ENCODE measurements at regions of chr4 and their contacts with region 1.

Region 1: DNA sequence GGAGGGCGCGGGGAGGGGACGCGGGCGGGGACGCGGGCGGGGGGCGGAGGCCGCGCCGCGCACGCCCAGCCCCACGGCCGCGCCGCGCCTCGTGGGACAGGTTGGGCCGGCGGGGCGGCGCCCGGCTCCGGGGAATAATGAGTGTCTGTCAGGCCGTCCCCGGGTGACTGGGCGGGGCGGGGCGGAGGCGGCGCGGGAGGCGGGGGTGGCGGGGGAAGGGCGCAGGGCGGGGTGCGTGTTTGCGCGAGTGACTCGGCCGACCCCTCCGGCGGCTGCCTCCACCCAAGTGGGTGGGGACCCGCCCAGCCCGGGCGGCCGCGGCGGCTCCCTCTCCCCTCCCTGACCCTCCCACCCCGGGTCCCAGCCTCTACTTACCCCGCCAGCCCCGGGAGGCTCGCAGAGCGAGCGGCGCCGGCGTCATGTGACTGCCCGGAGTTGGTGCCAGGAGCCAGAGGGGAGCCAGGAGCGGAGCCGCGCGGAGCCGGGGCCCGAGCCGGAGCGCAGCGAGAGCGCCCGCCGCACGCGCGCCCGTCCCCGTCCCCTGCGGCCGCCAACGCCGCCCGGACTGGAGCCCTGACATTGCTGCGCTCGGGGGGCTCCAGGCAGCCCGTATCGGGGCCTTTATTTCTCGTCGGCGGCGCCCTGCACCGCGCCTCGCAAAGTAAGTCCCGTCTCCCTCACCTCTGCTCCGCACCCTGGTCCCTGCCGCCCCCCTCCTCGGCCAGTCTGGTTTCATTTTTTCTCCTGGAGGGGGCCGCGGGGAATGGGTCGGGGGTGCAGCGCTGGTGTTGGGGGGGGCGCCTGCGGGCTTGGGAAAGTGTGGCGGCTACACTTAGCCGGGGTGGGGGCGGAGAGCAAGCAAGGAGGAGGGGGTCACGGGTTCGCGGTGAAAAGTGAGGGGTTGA is at the start of gene KLF3:
- DNase-seq: peak; percentile 79 to 98 (median 86)

Region 2: GRCh38 chr4:37686373-37687193 is 977.5 kb before region 1 on chr4 and contains the start of gene RELL1:
- intact Hi-C with region 1: loop called (anchors 5 kb)
- DNase-seq: peak; percentile 99 to 100 (median 99)

Region 3: GRCh38 chr4:38565271-38566199 is 98.5 kb before region 1 on chr4:
- intact Hi-C with region 1: loop called (anchors 2 kb)
- DNase-seq: no peak

Region 4: GRCh38 chr4:38612646-38613414 is 51.2 kb before region 1 on chr4:
- intact Hi-C with region 1: no loop called
- DNase-seq: no peak